ENCODE measurements at regions of chr16 and their contacts with region 1.

Region 1: DNA sequence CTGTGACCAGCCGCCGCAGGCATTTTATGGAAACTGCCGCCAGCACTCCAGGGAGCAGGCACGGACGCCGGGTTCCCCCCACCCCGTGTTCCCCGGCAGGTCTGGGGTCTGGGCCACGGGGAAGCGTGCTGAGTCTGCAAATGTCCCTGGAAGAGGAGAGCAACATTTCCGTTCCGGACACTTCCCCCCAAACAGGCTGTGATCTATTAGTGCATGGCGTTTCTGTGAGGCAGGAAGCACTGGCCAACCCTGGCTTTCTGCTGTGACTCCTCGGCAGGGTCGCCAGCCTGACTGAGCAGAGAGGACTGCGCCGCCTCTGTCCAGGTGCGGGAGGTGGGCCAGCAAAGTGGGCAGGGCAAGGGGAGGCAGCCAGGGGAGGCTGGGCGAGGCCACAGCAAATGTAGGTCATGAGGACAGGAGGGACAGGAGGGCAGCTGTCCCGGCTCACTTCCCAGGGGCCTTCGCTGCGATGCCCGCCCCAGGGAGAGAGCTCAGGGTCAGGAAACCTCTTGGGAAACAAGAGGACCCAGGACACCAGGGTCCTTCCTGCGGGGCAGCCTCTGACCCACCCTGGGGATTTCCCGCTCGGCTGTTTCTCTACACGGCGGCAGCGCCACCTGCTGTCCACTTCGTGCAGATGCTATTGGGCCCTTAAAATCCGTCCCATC is 9.5 kb downstream of the FOXF1 start:
- DNase-seq: peak; percentile 56 to 81
- ATAC-seq: peak in 3 of 4 donors; percentile 48 to 67 (median 57)
- H3K4me3 ChIP-seq: no peak overlapping the region
- H3K27ac ChIP-seq: no peak overlapping the region
- H3K4me1 ChIP-seq: peaks cover 11% of the 10 kb centered on the region
- H3K27me3 ChIP-seq: peaks cover 0 to 88% (median 45%) of the 10 kb centered on the region in 3 donors
- CTCF ChIP-seq: peak; percentile 86

Region 2: GRCh38 chr16:85821441-85822135 is 698.2 kb before region 1 on chr16:
- intact Hi-C with region 1: loop called (anchors 2 to 5 kb)
- DNase-seq: peak; percentile 66 to 86
- ATAC-seq: peak; percentile 76 to 90 (median 87)
- H3K4me3 ChIP-seq: no peak overlapping the region
- H3K27ac ChIP-seq: no peak overlapping the region
- H3K4me1 ChIP-seq: no peaks in the 10 kb centered on the region
- H3K27me3 ChIP-seq: peaks cover 0 to 36% (median 6%) of the 10 kb centered on the region in 3 donors
- CTCF ChIP-seq: peak; percentile 96

Region 3: GRCh38 chr16:86072328-86073102 is 447.3 kb before region 1 on chr16:
- intact Hi-C with region 1: loop called (anchors 2 to 5 kb)
- DNase-seq: peak in 1 of 2 donors; percentile 41
- ATAC-seq: peak in 1 of 4 donors; percentile 47
- H3K4me3 ChIP-seq: no peak overlapping the region
- H3K27ac ChIP-seq: no peak overlapping the region
- H3K4me1 ChIP-seq: no peaks in the 10 kb centered on the region
- H3K27me3 ChIP-seq: peaks cover 0 to 51% (median 10%) of the 10 kb centered on the region in 3 donors
- CTCF ChIP-seq: peak; percentile 64

Region 4: DNA sequence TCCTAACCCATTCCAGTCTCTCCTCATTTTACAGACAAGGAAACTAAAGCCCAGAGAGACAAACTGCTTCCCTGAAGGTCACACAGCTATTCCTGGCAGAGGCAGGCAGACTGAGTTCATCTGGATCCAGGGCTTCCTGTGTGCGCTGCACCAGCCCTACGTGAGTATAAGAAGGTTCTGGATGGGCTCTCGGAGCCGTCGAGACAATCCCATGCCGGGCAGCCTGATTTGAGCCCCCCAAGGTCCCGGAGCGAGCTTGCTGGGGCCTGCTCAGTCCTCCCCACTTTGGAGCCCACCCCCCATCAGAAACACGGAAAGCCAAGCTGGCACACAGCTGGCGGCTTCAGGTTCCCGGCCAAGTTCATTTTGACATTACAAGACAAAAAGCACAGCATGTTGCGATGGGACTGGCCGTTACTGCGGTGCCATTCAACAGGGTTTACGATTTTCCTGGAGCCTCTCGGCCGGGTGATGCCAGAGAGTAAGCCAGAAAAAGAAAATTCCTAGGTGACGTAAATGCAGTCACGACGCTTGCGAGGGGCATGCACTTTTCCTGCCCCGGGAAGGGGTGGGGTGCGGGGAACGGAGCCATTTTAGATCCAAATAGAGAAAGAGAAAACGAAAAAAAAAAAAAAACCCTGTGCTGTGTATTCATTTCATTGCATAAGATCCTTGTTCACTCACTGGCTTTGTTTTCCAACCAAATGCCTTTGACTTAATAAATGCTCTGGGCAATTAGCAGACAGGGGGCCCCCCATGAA is 176.6 kb before region 1 on chr16:
- intact Hi-C with region 1: loop called in 1 of 2 experiments (anchors 2 kb)
- DNase-seq: peak in 1 of 2 donors; percentile 38
- ATAC-seq: no peak
- H3K4me3 ChIP-seq: no peak overlapping the region
- H3K27ac ChIP-seq: peak overlapping the region; percentile 23
- H3K4me1 ChIP-seq: no peaks in the 10 kb centered on the region
- H3K27me3 ChIP-seq: peaks cover 0 to 52% (median 4%) of the 10 kb centered on the region in 3 donors
- CTCF ChIP-seq: no peak

Region 5: DNA sequence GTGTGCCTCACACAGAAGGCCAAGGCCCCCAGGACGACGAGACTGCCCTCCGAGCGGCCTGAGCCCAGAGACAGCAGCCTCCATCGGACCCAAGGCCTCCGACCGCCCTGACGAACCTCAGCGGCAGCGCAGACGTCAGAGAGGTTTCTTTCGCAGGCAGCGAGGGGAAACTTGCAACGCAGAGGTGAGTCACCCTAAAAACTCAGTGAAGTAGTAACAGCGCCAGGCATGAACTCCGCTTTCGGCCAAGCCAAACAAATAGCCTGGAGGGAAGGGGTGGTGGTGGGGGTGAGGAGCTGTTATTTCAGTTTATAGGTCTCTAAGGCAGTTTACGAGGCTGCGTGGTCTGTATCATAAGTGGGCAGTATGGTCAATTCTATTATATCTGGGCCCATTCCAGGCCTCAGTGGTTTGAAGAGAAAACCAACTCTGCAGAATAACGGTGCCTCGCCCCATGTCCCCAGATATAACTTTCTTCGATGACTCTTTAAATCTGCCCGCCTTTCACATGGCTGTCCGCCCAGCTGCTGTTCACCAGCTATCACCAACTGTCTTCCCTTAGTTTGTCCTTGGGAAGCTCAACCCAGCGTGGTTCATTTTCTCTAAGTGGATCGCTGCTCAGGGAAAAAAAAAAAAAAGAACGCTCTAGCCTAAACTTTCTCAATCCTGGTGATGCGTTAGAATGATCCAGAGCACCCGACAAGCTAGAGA is 52.9 kb before region 1 on chr16:
- intact Hi-C with region 1: no loop called
- DNase-seq: no peak
- ATAC-seq: no peak
- H3K4me3 ChIP-seq: no peak overlapping the region
- H3K27ac ChIP-seq: no peak overlapping the region
- H3K4me1 ChIP-seq: no peaks in the 10 kb centered on the region
- H3K27me3 ChIP-seq: peaks cover 0 to 12% (median 7%) of the 10 kb centered on the region in 3 donors
- CTCF ChIP-seq: no peak

Measured in psoas muscle (tissue), 8 donors.